ENCODE measurements at regions of chr15 and their contacts with region 1.

Region 1: DNA sequence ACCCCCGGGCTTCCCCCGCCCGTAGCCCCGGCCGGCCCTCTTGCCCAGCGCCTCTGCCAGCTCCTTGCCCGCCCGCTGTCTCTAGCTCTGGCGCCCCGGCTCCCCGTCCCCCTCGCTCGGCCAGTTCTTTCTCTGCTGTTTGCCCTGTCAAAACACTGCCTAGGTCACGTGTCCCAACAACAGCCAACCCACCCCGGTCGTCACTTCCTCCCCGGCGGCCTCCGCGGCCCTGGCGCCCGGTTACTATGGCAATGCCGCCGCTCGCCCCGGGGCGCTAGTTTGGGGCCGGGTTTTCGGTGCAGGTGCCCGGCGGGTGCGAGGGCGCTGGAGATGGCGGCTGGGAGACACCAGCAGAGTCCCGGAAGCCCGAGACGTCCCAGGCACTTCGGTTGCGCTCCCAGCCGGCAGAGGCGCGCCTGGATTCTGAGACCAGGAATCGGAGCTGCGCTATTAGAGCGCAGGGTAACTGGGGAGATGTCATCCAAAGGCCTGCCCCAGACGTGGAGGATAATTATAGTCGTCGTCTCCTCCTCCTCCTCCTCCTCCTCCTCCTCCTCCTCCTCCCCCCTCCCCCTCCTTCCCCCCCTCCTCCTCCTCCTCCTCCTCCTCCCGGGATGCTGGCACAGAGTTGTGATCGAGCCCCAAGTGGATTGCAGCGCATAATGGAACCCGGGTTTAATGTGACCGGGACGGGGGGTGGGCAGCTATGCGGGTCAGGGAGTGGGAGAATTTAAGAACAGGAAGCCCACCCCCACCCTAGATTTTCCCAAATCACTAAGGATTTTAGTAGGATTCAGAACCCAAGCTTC is at the start of gene ATOSA:
- DNase-seq: peak; percentile 84 to 93 (median 90)
- ATAC-seq: peak; percentile 87
- H3K4me3 ChIP-seq: peak within 1 kb of the TSS; percentile 82
- H3K4me3 Mint-ChIP-seq: peak within 1 kb of the TSS; percentile 91 to 100 (median 96)
- H3K27ac ChIP-seq: peak within 1 kb of the TSS; percentile 99
- H3K27ac Mint-ChIP-seq: peak within 1 kb of the TSS; percentile 94 to 100 (median 99)
- H3K4me1 ChIP-seq: peaks cover 35 to 54% of the 10 kb centered on the region in 2 donors
- H3K4me1 Mint-ChIP-seq: peaks cover 31 to 61% (median 46%) of the 10 kb centered on the region in 7 donors
- H3K27me3 ChIP-seq: no peaks in the 10 kb centered on the region
- H3K27me3 Mint-ChIP-seq: peaks cover 0 to 12% (median 0%) of the 10 kb centered on the region in 5 donors
- total RNA-seq, gene ATOSA: 35.1 to 117 (median 95.7) TPM

Region 2: DNA sequence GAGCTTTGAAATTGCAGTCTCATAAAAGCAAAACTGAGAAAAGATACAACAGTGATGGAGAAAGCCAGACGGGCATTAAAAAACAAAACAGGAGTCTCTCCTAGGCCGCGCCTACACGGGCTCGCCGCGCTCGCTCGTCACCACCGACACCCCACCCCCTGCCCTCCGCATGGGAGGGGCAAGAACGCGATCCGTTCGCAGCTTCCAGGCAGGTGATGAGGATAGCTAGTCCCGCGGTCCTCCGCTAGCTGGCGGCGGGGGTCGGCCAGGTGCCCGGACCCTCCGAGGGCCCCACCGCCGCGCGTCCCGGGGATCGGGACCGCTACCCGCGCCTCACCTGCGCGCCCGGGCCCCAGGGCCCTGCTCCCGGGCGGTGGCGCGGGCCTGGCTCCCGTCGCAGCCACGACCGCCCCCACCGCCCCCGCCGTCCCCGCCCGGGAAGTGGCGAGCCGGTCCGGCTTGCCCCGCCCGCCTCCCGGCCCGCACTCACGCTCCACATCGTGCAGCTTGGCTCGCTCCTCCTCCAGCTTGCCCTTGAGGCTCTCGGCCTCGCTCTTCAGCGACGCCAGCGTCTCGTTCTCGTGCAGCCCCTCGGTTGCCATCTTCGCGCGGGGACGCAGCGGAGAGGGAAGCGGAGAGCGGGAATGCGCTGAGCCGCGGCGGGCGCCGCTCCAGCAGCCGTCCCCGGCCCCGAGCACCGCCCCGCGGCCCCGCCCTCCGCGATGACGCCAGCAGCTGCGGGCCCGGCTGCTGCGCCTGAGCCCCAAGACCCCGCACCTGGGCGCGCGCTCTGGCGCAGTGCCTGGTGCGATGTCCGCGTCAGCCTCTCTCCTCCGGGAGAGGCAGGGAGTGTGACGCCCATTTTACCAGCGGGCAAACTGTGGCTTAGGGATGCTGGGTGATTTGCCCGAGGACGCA is 499.9 kb before region 1 on chr15:
- CTCF ChIA-PET with region 1: no interaction called
- POLR2A ChIA-PET with region 1: interaction called, 11 read pairs
- intact Hi-C with region 1: loop called (anchors 2 to 5 kb)
- DNase-seq: peak; percentile 79 to 92 (median 91)
- ATAC-seq: peak; percentile 91
- H3K4me3 ChIP-seq: peak overlapping the region; percentile 98
- H3K4me3 Mint-ChIP-seq: peak overlapping the region; percentile 86 to 100 (median 94)
- H3K27ac ChIP-seq: peak overlapping the region; percentile 95
- H3K27ac Mint-ChIP-seq: peak overlapping the region; percentile 90 to 99 (median 98)
- H3K4me1 ChIP-seq: peaks cover 19 to 20% of the 10 kb centered on the region in 2 donors
- H3K4me1 Mint-ChIP-seq: peaks cover 14 to 50% (median 40%) of the 10 kb centered on the region in 7 donors
- H3K27me3 ChIP-seq: no peaks in the 10 kb centered on the region
- H3K27me3 Mint-ChIP-seq: no peaks in the 10 kb centered on the region

Region 3: DNA sequence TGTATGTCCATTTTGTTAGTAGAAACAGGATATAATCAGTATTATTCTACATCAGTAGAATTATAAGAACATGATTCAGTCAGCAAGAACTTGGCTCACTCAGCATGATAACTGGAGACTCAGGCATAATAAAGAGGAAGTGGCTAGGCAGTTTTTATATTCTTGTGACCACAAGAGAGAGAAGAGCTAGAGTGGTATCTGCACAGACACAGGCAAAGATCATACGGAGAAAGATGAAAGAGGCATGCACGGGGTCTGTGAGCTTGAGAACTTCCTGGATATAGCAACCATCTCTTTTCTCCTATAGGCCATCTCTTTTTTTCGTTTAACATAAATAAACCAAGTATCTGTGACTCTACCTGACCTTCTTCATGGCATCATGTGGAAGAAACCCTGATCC is 197.5 kb before region 1 on chr15:
- CTCF ChIA-PET with region 1: no interaction called
- POLR2A ChIA-PET with region 1: no interaction called
- intact Hi-C with region 1: loop called in 1 of 2 experiments (anchors 1 kb)
- DNase-seq: peak in 7 of 9 donors; percentile 75 to 91 (median 87)
- ATAC-seq: peak; percentile 99
- H3K4me3 ChIP-seq: peak overlapping the region; percentile 36
- H3K4me3 Mint-ChIP-seq: peak overlapping the region; percentile 8 to 78 (median 58)
- H3K27ac ChIP-seq: no peak overlapping the region
- H3K27ac Mint-ChIP-seq: peak overlapping the region; percentile 15 to 88 (median 53)
- H3K4me1 ChIP-seq: peaks cover 30 to 43% of the 10 kb centered on the region in 2 donors
- H3K4me1 Mint-ChIP-seq: peaks cover 56 to 71% (median 59%) of the 10 kb centered on the region in 7 donors
- H3K27me3 ChIP-seq: no peaks in the 10 kb centered on the region
- H3K27me3 Mint-ChIP-seq: no peaks in the 10 kb centered on the region

Region 4: GRCh38 chr15:52568601-52569256 is 110.7 kb before region 1 on chr15 and contains the start of gene ARPP19:
- CTCF ChIA-PET with region 1: no interaction called
- POLR2A ChIA-PET with region 1: interaction called, 7 read pairs
- intact Hi-C with region 1: loop called (anchors 1 kb)
- DNase-seq: peak; percentile 58 to 81 (median 76)
- ATAC-seq: peak; percentile 83
- H3K4me3 ChIP-seq: peak within 1 kb of the TSS; percentile 75
- H3K4me3 Mint-ChIP-seq: peak within 1 kb of the TSS; percentile 89 to 100 (median 96)
- H3K27ac ChIP-seq: peak within 1 kb of the TSS; percentile 98
- H3K27ac Mint-ChIP-seq: peak within 1 kb of the TSS; percentile 95 to 100 (median 100)
- H3K4me1 ChIP-seq: peaks cover 13 to 25% of the 10 kb centered on the region in 2 donors
- H3K4me1 Mint-ChIP-seq: peaks cover 28 to 46% (median 42%) of the 10 kb centered on the region in 7 donors
- H3K27me3 ChIP-seq: no peaks in the 10 kb centered on the region
- H3K27me3 Mint-ChIP-seq: peaks cover 0 to 3% (median 0%) of the 10 kb centered on the region in 5 donors
- total RNA-seq, gene ARPP19: 94.9 to 148 (median 122) TPM

Region 5: DNA sequence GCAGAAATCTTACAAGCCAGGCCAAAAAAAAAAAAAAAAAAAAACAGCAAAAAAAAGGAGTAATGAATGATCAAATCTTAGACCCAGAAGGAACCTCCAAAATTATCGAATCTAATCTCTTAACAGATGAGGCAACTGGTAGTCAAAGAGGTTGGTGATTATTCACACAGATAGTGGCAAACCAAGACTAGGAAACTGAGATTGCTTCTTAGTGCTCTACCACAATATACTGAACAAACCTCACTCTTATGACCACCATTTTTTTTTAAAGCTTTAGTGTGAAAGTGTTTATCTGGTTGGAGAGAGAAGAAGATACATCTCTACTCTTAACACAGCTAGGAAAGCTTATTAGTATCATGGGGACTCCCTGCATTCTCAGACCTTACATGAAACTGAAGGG is 17.5 kb before region 1 on chr15:
- CTCF ChIA-PET with region 1: interaction called, 4 read pairs
- POLR2A ChIA-PET with region 1: interaction called, 4 read pairs
- intact Hi-C with region 1: loop called in 1 of 2 experiments (anchors 2 kb)
- DNase-seq: no peak
- ATAC-seq: no peak
- H3K4me3 ChIP-seq: no peak overlapping the region
- H3K4me3 Mint-ChIP-seq: no peak overlapping the region
- H3K27ac ChIP-seq: no peak overlapping the region
- H3K27ac Mint-ChIP-seq: peak overlapping the region in 2 of 9 donors; percentile 26 to 67
- H3K4me1 ChIP-seq: no peaks in the 10 kb centered on the region
- H3K4me1 Mint-ChIP-seq: peaks cover 12 to 51% (median 37%) of the 10 kb centered on the region in 7 donors
- H3K27me3 ChIP-seq: no peaks in the 10 kb centered on the region
- H3K27me3 Mint-ChIP-seq: no peaks in the 10 kb centered on the region

Region 6: GRCh38 chr15:52735231-52736089 is 56.0 kb after region 1 on chr15:
- CTCF ChIA-PET with region 1: interaction called, 7 read pairs
- POLR2A ChIA-PET with region 1: interaction called, 19 read pairs
- intact Hi-C with region 1: loop called (anchors 1 kb)
- DNase-seq: peak; percentile 22 to 83 (median 73)
- ATAC-seq: peak; percentile 90
- H3K4me3 ChIP-seq: no peak overlapping the region
- H3K4me3 Mint-ChIP-seq: no peak overlapping the region
- H3K27ac ChIP-seq: no peak overlapping the region
- H3K27ac Mint-ChIP-seq: peak overlapping the region in 3 of 9 donors; percentile 2 to 75 (median 55)
- H3K4me1 ChIP-seq: peaks cover under 1 to 4% of the 10 kb centered on the region in 2 donors
- H3K4me1 Mint-ChIP-seq: peaks cover 0 to 25% (median 7%) of the 10 kb centered on the region in 7 donors
- H3K27me3 ChIP-seq: no peaks in the 10 kb centered on the region
- H3K27me3 Mint-ChIP-seq: peaks cover 0 to 12% (median 3%) of the 10 kb centered on the region in 5 donors

Measured in naive thymus-derived CD4-positive, alpha-beta T cell (primary cell).